CD8-positive, alpha-beta T cell (primary cell): ENCODE measurements at regions of chr1 and their contacts with region 1.

Region 1: DNA sequence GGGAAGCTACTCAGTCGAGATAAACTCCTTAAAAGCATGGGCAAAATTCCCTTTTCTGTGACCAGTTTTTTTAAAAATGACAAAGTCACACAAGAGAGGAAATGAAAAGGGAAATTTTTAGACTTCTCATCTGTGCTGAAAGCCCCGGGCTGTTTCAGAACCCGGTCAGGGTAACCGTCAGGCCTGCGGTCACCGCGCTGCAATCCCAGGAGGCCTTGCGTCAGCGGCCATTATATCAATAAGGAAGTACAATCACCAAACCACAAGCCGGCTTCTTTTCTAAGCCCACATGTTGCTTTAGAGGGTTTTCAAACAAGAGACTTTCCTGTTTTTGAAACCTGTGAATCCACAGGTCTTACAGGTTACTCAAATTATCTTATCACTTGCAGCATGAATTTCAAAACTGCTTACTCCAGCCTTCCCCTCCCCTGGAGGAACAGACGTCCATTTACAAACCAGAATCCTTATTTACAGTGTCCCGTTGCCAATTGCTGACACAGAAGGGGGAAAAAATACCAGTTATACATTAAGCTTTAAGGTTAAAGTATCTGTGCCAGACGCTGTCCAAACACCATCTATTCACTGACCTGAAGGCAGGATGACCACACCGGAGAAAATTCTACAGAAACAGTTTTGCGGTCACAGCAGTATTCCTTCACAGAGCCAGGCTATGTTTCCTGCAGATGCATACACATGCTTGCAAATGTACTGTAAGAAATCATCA is 165.3 kb downstream of the TOMM20 start:
- DNase-seq: peak; percentile 58 to 97 (median 86)
- ATAC-seq: peak; percentile 85
- H3K4me3 ChIP-seq: peak overlapping the region in 1 of 2 experiments; percentile 16
- H3K4me3 Mint-ChIP-seq: peak overlapping the region; percentile 64
- H3K27ac ChIP-seq: peak overlapping the region; percentile 31 to 81
- H3K27ac Mint-ChIP-seq: peak overlapping the region; percentile 90
- H3K4me1 ChIP-seq: peaks cover 58% of the 10 kb centered on the region
- H3K4me1 Mint-ChIP-seq: peaks cover 62% of the 10 kb centered on the region
- H3K27me3 ChIP-seq: no peaks in the 10 kb centered on the region
- H3K27me3 Mint-ChIP-seq: no peaks in the 10 kb centered on the region
- CTCF ChIP-seq: no peak

Region 2: GRCh38 chr1:234925440-234926263 is 37.7 kb before region 1 on chr1:
- CTCF ChIA-PET with region 1: no interaction called
- POLR2A ChIA-PET with region 1: interaction called, 6 read pairs
- intact Hi-C with region 1: loop called in 1 of 2 experiments (anchors 2 kb)
- DNase-seq: peak in 3 of 9 experiments; percentile 47 to 70 (median 56)
- ATAC-seq: peak; percentile 60
- H3K4me3 ChIP-seq: peak overlapping the region in 1 of 2 experiments; percentile 36
- H3K4me3 Mint-ChIP-seq: peak overlapping the region; percentile 70
- H3K27ac ChIP-seq: peak overlapping the region in 1 of 2 experiments; percentile 38
- H3K27ac Mint-ChIP-seq: peak overlapping the region; percentile 74
- H3K4me1 ChIP-seq: peaks cover 44% of the 10 kb centered on the region
- H3K4me1 Mint-ChIP-seq: peaks cover 45% of the 10 kb centered on the region
- H3K27me3 ChIP-seq: no peaks in the 10 kb centered on the region
- H3K27me3 Mint-ChIP-seq: no peaks in the 10 kb centered on the region
- CTCF ChIP-seq: no peak

Region 3: DNA sequence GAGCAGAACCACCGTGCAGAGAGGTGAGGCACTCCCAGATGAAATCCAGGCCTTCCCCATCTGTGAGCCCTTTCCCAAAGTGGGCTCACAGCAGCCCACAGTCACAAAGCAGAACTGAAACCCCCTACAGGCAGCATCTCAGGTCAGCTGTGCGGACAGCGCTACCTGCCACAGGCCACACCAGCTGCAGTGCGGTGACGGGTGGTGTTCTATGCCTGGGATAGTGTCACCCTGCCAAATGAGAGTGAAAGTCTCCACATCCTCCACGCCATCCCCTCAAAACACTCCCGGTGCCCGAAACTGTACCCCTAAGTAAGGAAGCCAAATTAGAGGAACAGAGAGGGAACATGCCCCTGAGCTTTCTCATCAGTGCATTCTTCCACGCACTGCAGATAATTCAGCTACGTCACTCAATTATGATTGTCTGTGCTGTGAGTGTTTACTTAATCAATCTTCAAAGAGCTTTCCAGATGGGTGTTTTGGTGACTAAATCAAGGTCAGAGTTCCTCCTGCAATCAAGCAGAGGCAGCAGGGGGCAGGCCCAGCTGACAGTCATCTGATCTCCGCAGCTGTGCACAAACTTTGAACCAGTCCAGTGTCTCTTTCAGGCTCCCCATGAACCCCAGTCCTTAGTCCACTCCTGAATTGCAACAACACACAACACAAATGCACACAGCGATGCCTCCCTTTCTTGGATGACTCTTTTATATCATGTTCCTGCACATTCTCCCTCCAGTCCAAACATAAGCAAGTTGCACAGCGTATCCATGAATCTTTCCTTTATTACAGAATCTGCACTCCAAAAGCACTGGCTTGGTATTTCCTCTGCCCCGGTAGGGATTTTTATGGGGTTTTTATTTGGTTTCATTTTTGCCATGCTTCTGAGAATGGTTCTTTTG is 15.3 kb after region 1 on chr1:
- CTCF ChIA-PET with region 1: interaction called, 7 read pairs
- POLR2A ChIA-PET with region 1: interaction called, 9 read pairs
- intact Hi-C with region 1: loop called in 1 of 2 experiments (anchors 2 kb)
- DNase-seq: peak in 6 of 9 experiments; percentile 29 to 76 (median 62)
- ATAC-seq: peak; percentile 77
- H3K4me3 ChIP-seq: peak overlapping the region in 1 of 2 experiments; percentile 11
- H3K4me3 Mint-ChIP-seq: peak overlapping the region; percentile 66
- H3K27ac ChIP-seq: peak overlapping the region in 1 of 2 experiments; percentile 3
- H3K27ac Mint-ChIP-seq: peak overlapping the region; percentile 93
- H3K4me1 ChIP-seq: peaks cover 35% of the 10 kb centered on the region
- H3K4me1 Mint-ChIP-seq: peaks cover 47% of the 10 kb centered on the region
- H3K27me3 ChIP-seq: no peaks in the 10 kb centered on the region
- H3K27me3 Mint-ChIP-seq: no peaks in the 10 kb centered on the region
- CTCF ChIP-seq: no peak

Region 4: GRCh38 chr1:235277709-235278108 is 314.4 kb after region 1 on chr1:
- CTCF ChIA-PET with region 1: no interaction called
- POLR2A ChIA-PET with region 1: no interaction called
- intact Hi-C with region 1: no loop called
- DNase-seq: no peak
- ATAC-seq: no peak
- H3K4me3 ChIP-seq: no peak overlapping the region
- H3K4me3 Mint-ChIP-seq: no peak overlapping the region
- H3K27ac ChIP-seq: no peak overlapping the region
- H3K27ac Mint-ChIP-seq: peak overlapping the region; percentile 7
- H3K4me1 ChIP-seq: peaks cover 47% of the 10 kb centered on the region
- H3K4me1 Mint-ChIP-seq: peaks cover 78% of the 10 kb centered on the region
- H3K27me3 ChIP-seq: no peaks in the 10 kb centered on the region
- H3K27me3 Mint-ChIP-seq: no peaks in the 10 kb centered on the region
- CTCF ChIP-seq: no peak